Adrenal gland (tissue), 19 donors: ENCODE measurements at regions of chr16 and their contacts with region 1.

Region 1: DNA sequence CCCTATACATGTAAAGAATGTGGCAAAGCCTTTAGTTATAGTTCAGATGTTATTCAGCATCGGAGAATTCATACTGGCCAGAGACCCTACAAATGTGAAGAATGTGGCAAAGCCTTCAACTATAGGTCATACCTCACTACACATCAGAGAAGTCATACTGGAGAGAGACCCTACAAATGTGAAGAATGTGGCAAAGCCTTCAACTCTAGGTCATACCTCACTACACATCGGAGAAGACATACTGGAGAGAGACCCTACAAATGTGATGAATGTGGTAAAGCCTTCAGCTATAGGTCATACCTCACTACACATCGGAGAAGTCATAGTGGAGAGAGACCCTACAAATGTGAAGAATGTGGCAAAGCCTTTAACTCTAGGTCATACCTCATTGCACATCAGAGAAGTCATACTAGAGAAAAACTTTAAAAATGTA is 42.5 kb downstream of the ZNF267 start:
- DNase-seq: no peak
- H3K4me3 ChIP-seq: peak overlapping the region in 1 of 4 donors; percentile 38
- H3K27ac ChIP-seq: no peak overlapping the region
- H3K4me1 ChIP-seq: no peaks in the 10 kb centered on the region
- H3K27me3 ChIP-seq: no peaks in the 10 kb centered on the region
- CTCF ChIP-seq: no peak
- POLR2A ChIP-seq: no peak

Region 2: DNA sequence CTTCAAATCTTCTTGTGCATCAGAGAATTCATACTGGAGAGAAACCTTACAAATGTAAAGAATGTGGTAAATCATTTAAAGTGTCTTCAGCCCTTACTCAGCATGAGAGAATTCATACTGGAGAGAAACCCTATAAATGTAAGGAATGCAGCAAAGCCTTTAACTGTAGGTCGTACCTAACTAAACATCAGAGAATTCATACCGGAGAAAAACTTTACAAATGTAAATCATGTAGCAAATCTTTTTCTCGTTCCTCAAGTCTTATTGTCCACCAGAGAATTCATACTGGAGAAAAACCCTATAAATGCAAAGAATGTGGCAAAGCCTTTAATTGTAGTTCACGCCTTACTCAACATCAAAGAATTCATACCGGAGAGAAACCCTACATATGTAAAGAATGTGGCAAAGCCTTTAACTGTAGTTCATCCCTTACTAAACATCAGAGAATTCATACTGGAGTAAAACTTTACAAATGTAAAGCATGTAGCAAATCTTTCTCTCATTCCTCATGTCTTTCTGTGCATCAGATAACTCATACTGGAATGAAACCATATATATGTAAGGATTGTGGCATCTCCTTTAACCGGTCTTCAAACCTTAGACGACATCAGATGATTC is 161.0 kb before region 1 on chr16:
- intact Hi-C with region 1: loop called in 1 of 2 experiments (anchors 10 kb)
- DNase-seq: no peak
- H3K4me3 ChIP-seq: peak overlapping the region in 1 of 4 donors; percentile 2
- H3K27ac ChIP-seq: no peak overlapping the region
- H3K4me1 ChIP-seq: no peaks in the 10 kb centered on the region
- H3K27me3 ChIP-seq: no peaks in the 10 kb centered on the region
- CTCF ChIP-seq: no peak
- POLR2A ChIP-seq: no peak

Region 3: GRCh38 chr16:31873556-31874365 is 42.3 kb before region 1 on chr16 and contains the start of gene ZNF267:
- intact Hi-C with region 1: no loop called
- DNase-seq: peak; percentile 94 to 99 (median 97)
- H3K4me3 ChIP-seq: peak within 1 kb of the TSS; percentile 67 to 99 (median 88)
- H3K27ac ChIP-seq: peak within 1 kb of the TSS in 4 of 5 donors; percentile 88 to 91 (median 90)
- H3K4me1 ChIP-seq: peaks cover 8 to 40% of the 10 kb centered on the region in 2 donors
- H3K27me3 ChIP-seq: no peaks in the 10 kb centered on the region
- CTCF ChIP-seq: no peak
- POLR2A ChIP-seq: peak; percentile 70 to 84
- total RNA-seq, gene ZNF267: 3.2 to 34.1 (median 8.5) TPM

Region 4: GRCh38 chr16:31899505-31899904 is 16.6 kb before region 1 on chr16:
- intact Hi-C with region 1: no loop called
- DNase-seq: no peak
- H3K4me3 ChIP-seq: no peak overlapping the region
- H3K27ac ChIP-seq: no peak overlapping the region
- H3K4me1 ChIP-seq: no peaks in the 10 kb centered on the region
- H3K27me3 ChIP-seq: no peaks in the 10 kb centered on the region
- CTCF ChIP-seq: no peak
- POLR2A ChIP-seq: no peak